Naive thymus-derived CD4-positive, alpha-beta T cell (primary cell): ENCODE measurements at regions of chr16 and their contacts with region 1.

Region 1: DNA sequence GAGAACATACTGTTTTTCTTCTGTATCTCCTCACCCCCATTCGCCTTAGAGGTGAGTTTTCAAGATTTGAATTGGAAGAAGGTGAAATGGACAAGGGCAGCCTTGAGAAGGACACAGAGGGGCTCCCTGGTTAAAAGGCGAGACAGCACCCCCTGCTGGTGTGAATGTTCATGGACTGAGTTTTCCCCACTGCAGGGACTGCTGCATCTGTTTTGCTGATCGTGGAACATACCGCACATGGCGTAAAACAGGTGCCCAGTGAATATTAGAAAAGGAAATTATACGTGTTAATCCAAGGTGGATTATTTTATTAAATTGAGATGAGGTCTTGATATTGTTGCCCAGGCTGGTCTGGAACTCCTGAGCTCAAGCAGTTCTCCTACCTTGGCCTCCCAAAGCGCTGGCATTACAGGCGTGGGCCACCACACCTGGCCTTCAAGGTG is 54.5 kb downstream of the NDE1 start:
- DNase-seq: peak; percentile 48 to 73 (median 66)
- ATAC-seq: peak; percentile 88
- H3K4me3 ChIP-seq: no peak overlapping the region
- H3K4me3 Mint-ChIP-seq: no peak overlapping the region
- H3K27ac ChIP-seq: no peak overlapping the region
- H3K27ac Mint-ChIP-seq: peak overlapping the region; percentile 5 to 93 (median 63)
- H3K4me1 ChIP-seq: no peaks in the 10 kb centered on the region
- H3K4me1 Mint-ChIP-seq: peaks cover 3 to 22% (median 20%) of the 10 kb centered on the region in 7 donors
- H3K27me3 ChIP-seq: no peaks in the 10 kb centered on the region
- H3K27me3 Mint-ChIP-seq: no peaks in the 10 kb centered on the region

Region 2: GRCh38 chr16:15427648-15428239 is 276.8 kb before region 1 on chr16:
- CTCF ChIA-PET with region 1: interaction called, 10 read pairs
- POLR2A ChIA-PET with region 1: interaction called, 4 read pairs
- intact Hi-C with region 1: loop called (anchors 1 to 2 kb)
- DNase-seq: peak in 7 of 9 donors; percentile 12 to 42 (median 31)
- ATAC-seq: peak; percentile 61
- H3K4me3 ChIP-seq: no peak overlapping the region
- H3K4me3 Mint-ChIP-seq: no peak overlapping the region
- H3K27ac ChIP-seq: no peak overlapping the region
- H3K27ac Mint-ChIP-seq: no peak overlapping the region
- H3K4me1 ChIP-seq: no peaks in the 10 kb centered on the region
- H3K4me1 Mint-ChIP-seq: peaks cover 0 to 2% (median 0%) of the 10 kb centered on the region in 7 donors
- H3K27me3 ChIP-seq: no peaks in the 10 kb centered on the region
- H3K27me3 Mint-ChIP-seq: peaks cover 0 to 7% (median under 1%) of the 10 kb centered on the region in 5 donors

Region 3: GRCh38 chr16:15636392-15636873 is 68.1 kb before region 1 on chr16:
- CTCF ChIA-PET with region 1: interaction called, 3 read pairs
- POLR2A ChIA-PET with region 1: no interaction called
- intact Hi-C with region 1: loop called in 1 of 2 experiments (anchors 1 kb)
- DNase-seq: peak in 7 of 9 donors; percentile 26 to 54 (median 37)
- ATAC-seq: peak; percentile 87
- H3K4me3 ChIP-seq: peak overlapping the region; percentile 1
- H3K4me3 Mint-ChIP-seq: peak overlapping the region; percentile 21 to 91 (median 76)
- H3K27ac ChIP-seq: peak overlapping the region; percentile 68
- H3K27ac Mint-ChIP-seq: peak overlapping the region; percentile 89 to 96 (median 95)
- H3K4me1 ChIP-seq: peaks cover 37 to 47% of the 10 kb centered on the region in 2 donors
- H3K4me1 Mint-ChIP-seq: peaks cover 37 to 87% (median 66%) of the 10 kb centered on the region in 7 donors
- H3K27me3 ChIP-seq: no peaks in the 10 kb centered on the region
- H3K27me3 Mint-ChIP-seq: no peaks in the 10 kb centered on the region

Region 4: DNA sequence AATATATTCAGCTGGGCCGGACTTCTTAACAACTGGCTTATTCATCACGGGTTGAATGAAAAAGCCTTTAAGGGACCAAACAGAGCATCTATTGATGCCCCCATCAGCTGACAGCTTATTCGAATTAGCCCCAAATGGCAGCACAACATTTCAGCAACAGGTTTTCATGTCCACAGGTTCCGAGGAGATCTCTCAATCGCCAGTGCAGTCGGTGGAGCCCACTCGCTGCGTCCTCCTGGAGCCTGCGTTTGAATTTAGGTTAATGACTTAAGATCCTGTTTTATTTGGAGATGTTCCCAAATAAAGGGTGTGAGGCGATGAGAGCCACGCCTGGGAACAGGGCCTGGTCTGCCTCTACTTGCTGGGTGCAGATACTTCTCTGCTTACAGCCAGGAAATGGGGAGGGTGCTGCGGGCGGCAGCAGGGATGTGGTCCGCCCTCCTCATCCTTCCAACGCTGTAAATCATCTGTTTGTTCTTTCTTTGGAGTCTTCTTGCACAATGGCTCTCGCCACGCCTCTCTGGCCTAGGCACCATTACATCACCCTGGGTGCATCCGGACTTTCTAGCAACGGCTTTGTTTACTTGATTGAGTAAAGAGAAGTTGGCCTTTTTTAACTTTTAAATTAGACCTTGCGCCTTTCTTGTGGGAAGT is 31.9 kb before region 1 on chr16:
- CTCF ChIA-PET with region 1: interaction called, 3 read pairs
- POLR2A ChIA-PET with region 1: no interaction called
- intact Hi-C with region 1: loop called in 1 of 2 experiments (anchors 2 kb)
- DNase-seq: peak; percentile 52 to 93 (median 89)
- ATAC-seq: peak; percentile 96
- H3K4me3 ChIP-seq: peak overlapping the region; percentile 32
- H3K4me3 Mint-ChIP-seq: peak overlapping the region; percentile 60 to 86 (median 75)
- H3K27ac ChIP-seq: peak overlapping the region; percentile 86
- H3K27ac Mint-ChIP-seq: peak overlapping the region; percentile 94 to 97 (median 97)
- H3K4me1 ChIP-seq: peaks cover 18 to 27% of the 10 kb centered on the region in 2 donors
- H3K4me1 Mint-ChIP-seq: peaks cover 32 to 57% (median 42%) of the 10 kb centered on the region in 7 donors
- H3K27me3 ChIP-seq: no peaks in the 10 kb centered on the region
- H3K27me3 Mint-ChIP-seq: no peaks in the 10 kb centered on the region